Activated T-helper 2 cell treated with anti-CD3 and anti-CD28 coated beads, Interferon-gamma antibody, Interleukin-2, Interleukin-4, amounts not matched to agents 10 μg/mL and 5 μg/mL and 100 μg/mL, durations not matched to agents 14 hours and 24 hours and 36 hours (primary cell): ENCODE measurements at regions of chr7 and their contacts with region 1.

Region 1: GRCh38 chr7:134646425-134647305 is at the start of gene BPGM:
- DNase-seq: peak; percentile 97
- H3K4me3 Mint-ChIP-seq: no peak within 1 kb of the TSS
- H3K27ac Mint-ChIP-seq: no peak within 1 kb of the TSS
- H3K4me1 Mint-ChIP-seq: peaks cover 26% of the 10 kb centered on the region
- H3K27me3 Mint-ChIP-seq: no peaks in the 10 kb centered on the region
- total RNA-seq, gene BPGM: 28.0 and 29.2 TPM in 2 replicates

Region 2: GRCh38 chr7:134458806-134459698 is 187.6 kb before region 1 on chr7 and contains the start of gene AKR1B1:
- intact Hi-C with region 1: loop called (anchors 2 kb)
- DNase-seq: peak; percentile 85
- H3K4me3 Mint-ChIP-seq: peak within 1 kb of the TSS; percentile 82
- H3K27ac Mint-ChIP-seq: peak within 1 kb of the TSS; percentile 64
- H3K4me1 Mint-ChIP-seq: peaks cover 31% of the 10 kb centered on the region
- H3K27me3 Mint-ChIP-seq: no peaks in the 10 kb centered on the region
- total RNA-seq, gene AKR1B1: 102 and 107 TPM in 2 replicates

Region 3: GRCh38 chr7:134514663-134515062 is 132.0 kb before region 1 on chr7:
- intact Hi-C with region 1: no loop called
- DNase-seq: no peak
- H3K4me3 Mint-ChIP-seq: no peak overlapping the region
- H3K27ac Mint-ChIP-seq: no peak overlapping the region
- H3K4me1 Mint-ChIP-seq: peaks cover 7% of the 10 kb centered on the region
- H3K27me3 Mint-ChIP-seq: peaks cover 8% of the 10 kb centered on the region

Region 4: GRCh38 chr7:134669845-134670373 is 23.2 kb after region 1 on chr7:
- intact Hi-C with region 1: loop called (anchors 2 kb)
- DNase-seq: peak; percentile 34
- H3K4me3 Mint-ChIP-seq: no peak overlapping the region
- H3K27ac Mint-ChIP-seq: peak overlapping the region; percentile 71
- H3K4me1 Mint-ChIP-seq: peaks cover 25% of the 10 kb centered on the region
- H3K27me3 Mint-ChIP-seq: no peaks in the 10 kb centered on the region

Region 5: GRCh38 chr7:134737566-134738345 is 91.1 kb after region 1 on chr7:
- intact Hi-C with region 1: loop called (anchors 1 kb)
- DNase-seq: peak; percentile 28
- H3K4me3 Mint-ChIP-seq: no peak overlapping the region
- H3K27ac Mint-ChIP-seq: peak overlapping the region; percentile 90
- H3K4me1 Mint-ChIP-seq: peaks cover 55% of the 10 kb centered on the region
- H3K27me3 Mint-ChIP-seq: no peaks in the 10 kb centered on the region

Region 6: GRCh38 chr7:135147899-135148721 is 501.4 kb after region 1 on chr7 and contains the start of gene TMEM140:
- intact Hi-C with region 1: loop called (anchors 5 kb)
- DNase-seq: peak; percentile 63
- H3K4me3 Mint-ChIP-seq: peak within 1 kb of the TSS; percentile 86
- H3K27ac Mint-ChIP-seq: peak within 1 kb of the TSS; percentile 97
- H3K4me1 Mint-ChIP-seq: peaks cover 65% of the 10 kb centered on the region
- H3K27me3 Mint-ChIP-seq: no peaks in the 10 kb centered on the region
- total RNA-seq, gene TMEM140: 3.0 and 4.8 TPM in 2 replicates

Region 7: GRCh38 chr7:135558337-135558767 is 911.7 kb after region 1 on chr7:
- intact Hi-C with region 1: loop called (anchors 10 kb)
- DNase-seq: peak; percentile 64
- H3K4me3 Mint-ChIP-seq: no peak overlapping the region
- H3K27ac Mint-ChIP-seq: no peak overlapping the region
- H3K4me1 Mint-ChIP-seq: peaks cover 19% of the 10 kb centered on the region
- H3K27me3 Mint-ChIP-seq: peaks cover 1% of the 10 kb centered on the region